WTC11 (cell line): ENCODE measurements at regions of chr17 and their contacts with region 1.

Region 1: GRCh38 chr17:2386400-2387085 is 14.3 kb downstream of the MNT start:
- DNase-seq: no peak
- ATAC-seq: no peak
- H3K4me3 Mint-ChIP-seq: no peak overlapping the region
- H3K27ac Mint-ChIP-seq: peak overlapping the region; percentile 27; the same call in 1 of the 2 replicates
- H3K4me1 Mint-ChIP-seq: peaks cover 26% of the 10 kb centered on the region
- H3K27me3 Mint-ChIP-seq: no peaks in the 10 kb centered on the region
- CTCF ChIP-seq: no peak

Region 2: DNA sequence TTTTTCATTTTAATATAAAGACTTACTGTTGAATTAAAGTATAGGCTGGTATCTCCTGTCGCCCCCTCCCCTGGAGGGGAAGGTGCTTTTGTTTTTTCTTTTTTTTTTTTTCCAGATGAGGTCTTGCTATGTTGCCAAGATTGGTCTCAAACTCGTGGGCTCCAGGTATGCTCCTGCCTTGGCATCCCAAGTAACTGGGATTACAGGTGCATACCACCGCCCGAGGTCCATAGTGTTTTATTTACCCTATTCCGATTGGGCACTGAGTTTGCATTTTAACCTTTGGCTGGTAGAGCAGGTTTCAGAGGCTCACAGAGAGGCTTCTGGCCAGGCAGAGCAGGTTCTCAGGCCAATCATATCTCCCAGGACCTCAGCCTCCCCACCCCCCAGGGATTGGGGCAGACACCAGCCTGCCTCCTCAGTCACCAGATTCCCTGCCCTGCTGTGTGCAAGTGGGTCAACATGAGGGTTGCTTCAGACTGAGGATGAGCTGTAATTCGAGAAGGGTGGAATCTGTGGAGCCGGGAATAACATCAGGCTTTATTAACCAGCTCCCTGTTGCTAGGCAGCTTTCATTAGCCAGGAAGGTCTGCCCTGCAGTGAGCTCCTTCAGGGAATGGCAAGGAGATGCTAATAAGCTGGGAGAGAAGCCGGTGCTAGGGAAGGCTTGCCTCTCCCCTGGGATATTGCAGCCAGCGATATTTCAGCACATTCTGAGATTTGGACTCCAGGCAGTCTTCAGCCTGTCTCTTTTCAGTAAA is 38.8 kb before region 1 on chr17:
- CTCF ChIA-PET with region 1: interaction called, 24 read pairs
- POLR2A ChIA-PET with region 1: no interaction called
- DNase-seq: peak; percentile 83
- ATAC-seq: peak; percentile 94
- H3K4me3 Mint-ChIP-seq: peak overlapping the region; percentile 61
- H3K27ac Mint-ChIP-seq: peak overlapping the region; percentile 99
- H3K4me1 Mint-ChIP-seq: peaks cover 32% of the 10 kb centered on the region
- H3K27me3 Mint-ChIP-seq: no peaks in the 10 kb centered on the region
- CTCF ChIP-seq: no peak

Region 3: GRCh38 chr17:2369551-2370210 is 16.9 kb before region 1 on chr17:
- CTCF ChIA-PET with region 1: interaction called, 67 read pairs
- POLR2A ChIA-PET with region 1: no interaction called
- DNase-seq: peak; percentile 64
- ATAC-seq: peak; percentile 71
- H3K4me3 Mint-ChIP-seq: no peak overlapping the region
- H3K27ac Mint-ChIP-seq: peak overlapping the region; percentile 80
- H3K4me1 Mint-ChIP-seq: peaks cover 12% of the 10 kb centered on the region
- H3K27me3 Mint-ChIP-seq: no peaks in the 10 kb centered on the region
- CTCF ChIP-seq: no peak

Region 4: GRCh38 chr17:2401426-2402221 is 15.1 kb after region 1 on chr17:
- CTCF ChIA-PET with region 1: interaction called, 57 read pairs
- POLR2A ChIA-PET with region 1: interaction called, 12 read pairs
- DNase-seq: peak; percentile 100
- ATAC-seq: peak; percentile 36
- H3K4me3 Mint-ChIP-seq: peak overlapping the region; percentile 89
- H3K27ac Mint-ChIP-seq: peak overlapping the region; percentile 100
- H3K4me1 Mint-ChIP-seq: peaks cover 25% of the 10 kb centered on the region
- H3K27me3 Mint-ChIP-seq: 0 out of 2 replicates have a peak, but pooled peaks cover 5% of the 10 kb centered on the region
- CTCF ChIP-seq: no peak

Region 5: DNA sequence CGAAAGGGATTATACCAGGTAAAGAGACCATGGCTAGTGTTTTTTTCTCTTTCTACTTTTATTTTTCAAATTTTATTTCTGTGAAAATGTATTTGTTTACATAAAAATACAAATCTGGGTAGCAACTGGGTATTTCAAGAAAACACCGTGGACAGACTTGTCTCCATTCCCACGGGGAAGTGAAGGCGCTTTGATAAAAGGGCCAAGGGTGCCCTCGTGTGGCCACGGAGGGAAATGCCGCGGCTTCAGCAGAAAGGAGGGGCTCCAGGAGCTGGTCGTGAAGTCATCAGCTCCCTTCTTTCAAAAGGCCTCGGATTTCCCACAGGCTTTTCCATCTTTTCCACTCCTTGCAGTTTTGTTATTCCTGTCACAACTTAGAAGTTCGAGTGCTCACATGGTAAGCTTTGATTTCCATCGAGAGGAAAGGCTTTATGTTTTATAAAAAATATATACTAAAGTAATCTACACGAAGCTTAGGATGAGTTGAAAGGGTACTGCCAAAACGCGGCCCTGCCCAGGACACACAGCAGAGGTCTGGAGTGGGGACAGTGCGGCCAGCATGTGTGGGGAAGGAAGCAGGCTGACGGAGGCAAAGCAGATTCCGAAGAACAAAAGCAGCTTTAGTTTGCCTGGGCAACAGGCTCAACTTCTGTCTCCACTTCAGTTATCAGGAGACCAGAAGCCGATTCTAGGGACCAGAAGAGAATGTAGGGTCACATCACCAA is 29.6 kb after region 1 on chr17:
- CTCF ChIA-PET with region 1: interaction called, 268 read pairs
- POLR2A ChIA-PET with region 1: interaction called, 11 read pairs
- DNase-seq: peak; percentile 94
- ATAC-seq: peak; percentile 61
- H3K4me3 Mint-ChIP-seq: no peak overlapping the region
- H3K27ac Mint-ChIP-seq: peak overlapping the region; percentile 71
- H3K4me1 Mint-ChIP-seq: peaks cover 5% of the 10 kb centered on the region
- H3K27me3 Mint-ChIP-seq: no peaks in the 10 kb centered on the region
- CTCF ChIP-seq: peak; percentile 92

Region 6: GRCh38 chr17:2685696-2686095 is 299.2 kb after region 1 on chr17:
- CTCF ChIA-PET with region 1: interaction called, 14 read pairs
- POLR2A ChIA-PET with region 1: no interaction called
- DNase-seq: no peak
- ATAC-seq: peak; percentile 24
- H3K4me3 Mint-ChIP-seq: no peak overlapping the region
- H3K27ac Mint-ChIP-seq: peak overlapping the region; percentile 72; the same call in 1 of the 2 replicates
- H3K4me1 Mint-ChIP-seq: peaks cover 5% of the 10 kb centered on the region
- H3K27me3 Mint-ChIP-seq: no peaks in the 10 kb centered on the region
- CTCF ChIP-seq: no peak